Activated CD4-positive, alpha-beta T cell treated with anti-CD3 and anti-CD28 coated beads, Interleukin-2, amount 10 ng/mL, durations not matched to agents 24 days and 14 days (primary cell): ENCODE measurements at regions of chr12 and their contacts with region 1.

Region 1: DNA sequence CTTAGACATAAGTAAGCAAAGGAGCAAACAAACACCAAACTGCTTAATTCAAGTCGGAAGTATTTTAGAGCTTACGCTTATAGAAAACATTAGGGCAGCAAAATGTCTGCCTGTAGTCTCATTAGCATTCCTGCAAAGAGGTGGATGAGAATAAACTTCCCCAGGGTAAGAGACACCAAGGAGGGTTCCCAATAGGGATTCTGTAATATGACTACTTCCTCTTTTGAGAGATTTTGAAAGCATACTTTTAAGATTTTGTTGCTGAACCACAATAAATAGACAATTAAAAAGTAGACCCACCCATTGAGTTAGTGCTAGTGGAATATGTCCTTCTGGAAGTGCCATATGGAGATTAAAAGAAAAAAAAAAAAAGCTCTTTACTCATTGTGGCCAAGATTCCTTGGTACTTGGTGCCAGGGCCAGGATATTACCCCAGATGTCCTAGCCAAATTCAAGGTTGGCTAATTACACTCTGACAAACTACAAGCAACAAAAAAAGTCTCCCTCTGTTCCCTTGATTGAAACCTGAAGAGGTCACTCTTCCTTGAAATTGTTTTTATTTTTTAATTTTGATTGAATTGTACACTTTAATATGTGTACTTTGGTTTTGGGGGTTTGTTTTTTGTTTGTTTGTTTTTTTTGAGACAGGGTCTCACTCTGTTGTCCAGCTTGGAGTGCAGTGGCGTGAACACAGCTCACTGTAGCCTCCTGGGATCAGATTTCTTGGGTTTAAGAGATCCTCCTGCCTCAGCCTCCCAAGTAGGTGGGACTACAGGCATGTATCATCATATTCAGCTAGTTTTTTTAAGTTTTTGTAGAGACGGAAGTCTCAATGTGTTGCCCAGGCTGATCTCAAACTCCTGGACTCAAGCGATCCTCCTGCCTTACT is 8.7 kb downstream of the CLIP1 start:
- DNase-seq: no peak
- H3K4me3 Mint-ChIP-seq: peak overlapping the region; percentile 78
- H3K27ac Mint-ChIP-seq: peak overlapping the region; percentile 95
- H3K4me1 Mint-ChIP-seq: peaks cover 22% of the 10 kb centered on the region
- H3K27me3 Mint-ChIP-seq: no peaks in the 10 kb centered on the region

Region 2: DNA sequence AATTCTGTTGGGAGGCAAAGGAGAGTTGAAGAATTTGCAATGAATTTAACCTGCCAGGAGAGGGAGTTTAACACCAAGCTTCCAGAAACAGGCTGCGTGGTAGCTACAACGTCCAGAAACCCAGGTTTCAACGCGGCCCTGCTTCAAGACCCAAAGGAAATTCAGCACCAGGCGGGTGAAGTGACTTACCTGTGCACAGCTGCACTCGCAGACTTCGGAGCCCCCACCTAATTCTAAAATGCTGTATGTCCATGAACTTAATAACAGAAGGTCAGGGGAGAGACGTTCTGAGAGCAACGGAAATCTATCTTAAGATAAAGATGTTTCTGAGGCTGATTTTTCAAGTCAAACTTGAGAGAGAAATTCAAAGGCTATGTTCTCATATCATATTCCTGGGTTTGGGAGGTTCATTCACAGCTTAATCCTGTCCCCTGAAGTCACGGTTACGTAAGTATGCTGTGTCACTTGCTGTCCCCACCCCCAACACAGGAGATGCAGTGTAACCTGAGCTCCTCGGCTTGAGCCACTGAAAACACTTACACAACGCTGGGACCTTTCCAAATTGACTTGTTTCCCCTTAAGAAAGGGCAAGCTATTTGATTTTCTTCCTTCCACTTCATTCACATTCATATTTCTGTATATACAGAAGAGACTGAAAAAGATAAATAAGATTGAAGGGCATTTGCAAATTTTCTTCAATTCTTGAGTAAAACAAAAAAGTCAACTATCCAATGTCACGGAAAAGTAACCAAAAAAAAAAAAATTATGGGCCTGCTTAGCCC is 14.0 kb before region 1 on chr12:
- intact Hi-C with region 1: loop called (anchors 1 kb)
- DNase-seq: peak; percentile 86
- H3K4me3 Mint-ChIP-seq: peak overlapping the region; percentile 71
- H3K27ac Mint-ChIP-seq: peak overlapping the region; percentile 87
- H3K4me1 Mint-ChIP-seq: peaks cover 34% of the 10 kb centered on the region
- H3K27me3 Mint-ChIP-seq: no peaks in the 10 kb centered on the region

Region 3: GRCh38 chr12:122449353-122449752 is 35.6 kb after region 1 on chr12:
- intact Hi-C with region 1: loop called (anchors 5 kb)
- DNase-seq: no peak
- H3K4me3 Mint-ChIP-seq: no peak overlapping the region
- H3K27ac Mint-ChIP-seq: no peak overlapping the region
- H3K4me1 Mint-ChIP-seq: peaks cover 29% of the 10 kb centered on the region
- H3K27me3 Mint-ChIP-seq: peaks cover 4% of the 10 kb centered on the region

Region 4: DNA sequence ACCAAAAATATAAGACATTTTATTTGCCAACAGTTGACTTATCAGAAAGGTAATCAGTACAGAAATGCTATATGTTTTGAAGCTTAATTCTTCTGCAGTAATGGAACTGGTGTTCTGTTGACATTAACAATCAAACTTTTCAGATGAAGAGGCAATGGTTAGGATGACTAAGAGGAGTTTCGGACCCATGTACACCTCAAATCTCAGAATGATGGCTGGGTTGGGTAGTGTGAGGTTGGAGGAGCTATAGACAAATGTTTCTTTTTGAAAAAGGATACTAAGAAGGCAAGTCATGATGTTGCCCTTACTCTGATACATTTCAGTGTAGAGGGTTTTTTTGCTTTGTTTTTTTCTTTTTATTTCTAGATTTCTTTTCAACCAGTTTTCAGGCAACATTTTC is 180.2 kb after region 1 on chr12:
- intact Hi-C with region 1: no loop called
- DNase-seq: no peak
- H3K4me3 Mint-ChIP-seq: no peak overlapping the region
- H3K27ac Mint-ChIP-seq: peak overlapping the region; percentile 10
- H3K4me1 Mint-ChIP-seq: peaks cover 2% of the 10 kb centered on the region
- H3K27me3 Mint-ChIP-seq: no peaks in the 10 kb centered on the region